Activated CD4-positive, alpha-beta memory T cell treated with anti-CD3 and anti-CD28 coated beads for 36 hours (primary cell): ENCODE measurements at regions of chr10 and their contacts with region 1.

Region 1: DNA sequence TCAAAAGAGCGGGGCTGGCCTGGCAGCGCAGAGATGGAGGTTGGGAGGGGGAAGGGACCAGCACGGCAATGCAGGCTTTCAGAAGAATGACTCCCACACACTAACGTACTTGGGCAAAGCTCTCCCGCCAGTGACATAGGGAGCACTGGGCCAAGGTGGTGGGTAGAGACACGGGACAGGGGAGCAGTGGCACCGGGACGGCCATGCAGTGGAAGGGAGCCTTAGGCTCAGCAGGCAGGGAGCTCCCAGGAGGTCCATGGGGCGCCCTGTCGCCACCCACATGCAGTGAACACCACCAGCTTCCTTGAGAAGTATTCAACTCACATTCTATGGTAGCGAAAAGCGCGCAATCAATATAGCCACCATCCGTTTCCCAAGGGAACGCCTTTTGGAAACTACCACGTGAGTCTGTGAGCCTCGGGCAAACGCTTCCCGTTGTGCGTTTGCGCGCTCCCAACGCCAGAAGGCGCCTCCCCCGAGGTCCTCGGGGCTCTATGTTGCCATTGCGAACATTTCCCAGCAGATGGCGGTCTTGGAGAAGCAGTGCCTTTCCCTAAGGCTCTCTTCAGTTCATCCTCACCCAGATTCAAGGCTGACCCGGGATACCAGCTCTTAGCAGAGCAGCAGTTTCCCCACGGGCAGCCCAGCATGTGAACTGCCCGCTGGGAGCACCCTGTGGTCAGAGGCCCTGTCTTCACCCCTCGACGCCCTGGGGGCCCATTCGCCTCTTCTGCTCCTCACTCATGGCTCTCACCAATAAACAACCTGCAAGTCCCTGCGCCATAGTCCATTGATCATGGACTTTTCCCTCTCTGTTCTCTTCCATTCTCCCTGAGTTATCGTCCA is 16.4 kb upstream of the OPALIN start:
- DNase-seq: peak; percentile 87
- H3K4me3 Mint-ChIP-seq: peak overlapping the region; percentile 69
- H3K27ac Mint-ChIP-seq: no peak overlapping the region
- H3K4me1 Mint-ChIP-seq: peaks cover 8% of the 10 kb centered on the region
- H3K27me3 Mint-ChIP-seq: peaks cover 11% of the 10 kb centered on the region

Region 2: GRCh38 chr10:96334616-96335526 is 40.3 kb before region 1 on chr10:
- CTCF ChIA-PET with region 1: interaction called, 12 read pairs
- POLR2A ChIA-PET with region 1: no interaction called
- intact Hi-C with region 1: no loop called
- DNase-seq: no peak
- H3K4me3 Mint-ChIP-seq: no peak overlapping the region
- H3K27ac Mint-ChIP-seq: no peak overlapping the region
- H3K4me1 Mint-ChIP-seq: peaks cover 12% of the 10 kb centered on the region
- H3K27me3 Mint-ChIP-seq: peaks cover 27% of the 10 kb centered on the region

Region 3: GRCh38 chr10:96339957-96340904 is 35.0 kb before region 1 on chr10:
- CTCF ChIA-PET with region 1: interaction called, 12 read pairs
- POLR2A ChIA-PET with region 1: no interaction called
- intact Hi-C with region 1: no loop called
- DNase-seq: peak; percentile 71
- H3K4me3 Mint-ChIP-seq: no peak overlapping the region
- H3K27ac Mint-ChIP-seq: no peak overlapping the region
- H3K4me1 Mint-ChIP-seq: peaks cover 7% of the 10 kb centered on the region
- H3K27me3 Mint-ChIP-seq: peaks cover 11% of the 10 kb centered on the region

Region 4: DNA sequence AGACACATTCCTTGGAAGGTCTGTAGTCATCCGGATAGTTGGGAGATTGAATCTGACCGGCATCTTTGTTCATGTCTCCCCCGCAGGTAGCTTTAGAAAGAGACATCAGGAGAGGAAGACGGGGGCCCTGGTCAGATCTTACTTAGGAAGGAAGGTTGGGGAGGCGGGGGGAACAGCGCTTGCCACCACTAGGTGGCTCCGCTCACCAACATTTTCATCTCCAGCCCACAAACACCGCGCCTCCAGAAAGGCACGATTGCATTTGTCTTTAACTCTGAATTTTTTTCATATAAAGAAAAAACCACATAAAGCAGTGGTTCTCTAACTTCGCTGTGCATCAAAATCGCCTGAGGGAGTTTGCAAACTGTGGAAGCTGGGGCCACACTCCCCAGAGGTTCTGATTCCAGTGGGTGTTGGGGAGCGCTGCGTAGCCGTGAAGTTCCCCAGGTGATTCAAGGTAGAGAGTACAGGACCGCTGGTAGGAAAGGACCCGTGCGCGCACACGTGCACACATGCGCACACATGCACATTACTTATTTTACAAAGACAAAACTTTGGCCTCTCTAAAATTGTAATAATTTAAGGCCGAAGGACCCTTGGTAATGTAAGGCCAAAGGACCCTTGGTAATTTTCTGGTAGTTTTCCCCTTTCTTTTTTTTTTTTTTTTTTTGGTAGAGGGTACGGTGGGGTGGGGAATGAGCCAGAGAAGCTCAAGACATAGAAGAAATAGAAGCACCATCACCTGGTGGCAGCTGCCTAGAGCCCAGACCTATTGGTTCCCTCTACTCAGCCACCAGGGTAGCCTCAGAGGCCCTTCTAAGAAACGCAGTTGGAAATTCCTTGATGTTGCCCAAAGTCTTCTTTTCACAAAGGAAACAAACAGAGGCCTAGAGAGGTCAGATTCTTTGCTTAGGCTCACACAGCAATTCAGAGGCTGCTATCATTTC is 21.0 kb after region 1 on chr10:
- CTCF ChIA-PET with region 1: interaction called, 19 read pairs
- POLR2A ChIA-PET with region 1: no interaction called
- intact Hi-C with region 1: loop called (anchors 1 kb)
- DNase-seq: peak; percentile 74
- H3K4me3 Mint-ChIP-seq: no peak overlapping the region
- H3K27ac Mint-ChIP-seq: no peak overlapping the region
- H3K4me1 Mint-ChIP-seq: peaks cover 6% of the 10 kb centered on the region
- H3K27me3 Mint-ChIP-seq: peaks cover 17% of the 10 kb centered on the region

Region 5: GRCh38 chr10:96513698-96514561 is 138.7 kb after region 1 on chr10 and contains the start of gene TLL2:
- CTCF ChIA-PET with region 1: interaction called, 21 read pairs
- POLR2A ChIA-PET with region 1: no interaction called
- intact Hi-C with region 1: loop called (anchors 1 kb)
- DNase-seq: peak; percentile 77
- H3K4me3 Mint-ChIP-seq: peak within 1 kb of the TSS; percentile 57
- H3K27ac Mint-ChIP-seq: no peak within 1 kb of the TSS
- H3K4me1 Mint-ChIP-seq: peaks cover 20% of the 10 kb centered on the region
- H3K27me3 Mint-ChIP-seq: peaks cover 25% of the 10 kb centered on the region
- total RNA-seq, gene TLL2: 0.05 TPM in 1 of 2 experiments, not detected in the other

Region 6: GRCh38 chr10:96642973-96643372 is 267.8 kb after region 1 on chr10:
- CTCF ChIA-PET with region 1: interaction called, 3 read pairs
- POLR2A ChIA-PET with region 1: no interaction called
- intact Hi-C with region 1: loop called (anchors 5 kb)
- DNase-seq: peak; percentile 86
- H3K4me3 Mint-ChIP-seq: no peak overlapping the region
- H3K27ac Mint-ChIP-seq: no peak overlapping the region
- H3K4me1 Mint-ChIP-seq: peaks cover 18% of the 10 kb centered on the region
- H3K27me3 Mint-ChIP-seq: no peaks in the 10 kb centered on the region

Region 7: GRCh38 chr10:96719850-96720421 is 344.7 kb after region 1 on chr10:
- CTCF ChIA-PET with region 1: no interaction called
- POLR2A ChIA-PET with region 1: no interaction called
- intact Hi-C with region 1: loop called (anchors 10 kb)
- DNase-seq: peak; percentile 69
- H3K4me3 Mint-ChIP-seq: peak overlapping the region; percentile 89
- H3K27ac Mint-ChIP-seq: no peak overlapping the region
- H3K4me1 Mint-ChIP-seq: peaks cover 12% of the 10 kb centered on the region
- H3K27me3 Mint-ChIP-seq: peaks cover 1% of the 10 kb centered on the region